Activated CD4-positive, alpha-beta T cell treated with anti-CD3 and anti-CD28 coated beads, Interleukin-2, amount 10 ng/mL, durations not matched to agents 7 days and 5 days (primary cell): ENCODE measurements at regions of chr16 and their contacts with region 1.

Region 1: GRCh38 chr16:89395141-89395874 is 95.1 kb downstream of the ANKRD11 start:
- DNase-seq: no peak
- H3K4me3 Mint-ChIP-seq: no peak overlapping the region
- H3K27ac Mint-ChIP-seq: no peak overlapping the region
- H3K4me1 Mint-ChIP-seq: peaks cover 36% of the 10 kb centered on the region
- H3K27me3 Mint-ChIP-seq: no peaks in the 10 kb centered on the region

Region 2: GRCh38 chr16:89383082-89384003 is 12.0 kb before region 1 on chr16:
- CTCF ChIA-PET with region 1: interaction called, 10 read pairs
- POLR2A ChIA-PET with region 1: no interaction called
- DNase-seq: peak; percentile 44
- H3K4me3 Mint-ChIP-seq: peak overlapping the region; percentile 16
- H3K27ac Mint-ChIP-seq: peak overlapping the region; percentile 78
- H3K4me1 Mint-ChIP-seq: peaks cover 79% of the 10 kb centered on the region
- H3K27me3 Mint-ChIP-seq: no peaks in the 10 kb centered on the region